K562 (cell line): ENCODE measurements at regions of chr1 and their contacts with region 1.

Region 1: DNA sequence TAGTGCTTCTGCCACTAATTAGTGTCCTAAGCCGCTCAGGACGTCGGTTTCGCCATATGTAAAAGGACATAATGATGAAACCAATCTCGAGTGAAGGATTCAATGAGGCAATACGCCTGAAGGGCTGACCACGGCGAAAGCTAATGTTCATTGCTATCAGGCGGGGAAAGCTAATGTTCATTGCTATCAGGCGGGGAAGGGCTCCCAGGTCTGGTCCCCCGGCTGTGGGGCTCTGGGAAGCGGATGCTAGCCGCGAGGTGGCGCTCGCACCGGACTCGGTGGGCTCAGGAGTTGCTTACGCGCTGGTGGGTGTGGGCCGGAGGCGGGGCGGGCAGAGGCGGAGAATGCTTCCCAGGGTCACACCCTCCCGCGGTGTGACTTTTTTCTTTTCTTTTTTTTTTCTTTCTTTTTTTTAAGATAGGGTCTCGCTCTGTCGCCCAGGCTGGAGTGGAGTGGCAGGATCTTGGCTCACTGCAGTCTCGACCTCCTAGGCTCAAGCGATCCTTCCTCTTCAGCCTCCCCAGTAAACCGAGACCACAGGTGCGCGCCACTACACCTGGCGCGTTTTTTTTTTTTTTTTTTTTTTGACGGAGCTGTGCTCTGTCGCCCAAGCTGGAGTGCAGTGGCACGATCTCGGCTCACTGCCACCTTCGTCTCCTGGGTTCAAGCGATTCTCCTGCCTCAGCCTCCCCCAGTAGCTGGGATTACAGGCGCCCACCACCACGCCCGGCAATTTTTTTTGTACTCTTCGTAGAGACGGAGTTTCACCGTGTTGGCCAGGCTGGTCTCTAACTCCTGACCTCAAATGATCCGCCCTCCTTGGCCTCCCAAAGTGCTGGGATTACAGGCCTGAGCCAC is 1.1 kb upstream of the PEAR1 start:
- DNase-seq: peak; percentile 91 to 96 (median 92)
- ATAC-seq: peak; percentile 94
- H3K4me3 ChIP-seq: no peak overlapping the region
- H3K27ac ChIP-seq: no peak overlapping the region; the same call in 2 of the 3 replicates
- H3K4me1 ChIP-seq: peaks cover 30 to 48% of the 10 kb centered on the region in 2 experiments
- H3K27me3 ChIP-seq: no peaks in the 10 kb centered on the region
- CTCF ChIP-seq: peak; percentile 91 to 94 (median 93)
- EP300 ChIP-seq: no peak
- POLR2A ChIP-seq: no peak
- RAD21 ChIP-seq: peak; percentile 87 to 93

Region 2: DNA sequence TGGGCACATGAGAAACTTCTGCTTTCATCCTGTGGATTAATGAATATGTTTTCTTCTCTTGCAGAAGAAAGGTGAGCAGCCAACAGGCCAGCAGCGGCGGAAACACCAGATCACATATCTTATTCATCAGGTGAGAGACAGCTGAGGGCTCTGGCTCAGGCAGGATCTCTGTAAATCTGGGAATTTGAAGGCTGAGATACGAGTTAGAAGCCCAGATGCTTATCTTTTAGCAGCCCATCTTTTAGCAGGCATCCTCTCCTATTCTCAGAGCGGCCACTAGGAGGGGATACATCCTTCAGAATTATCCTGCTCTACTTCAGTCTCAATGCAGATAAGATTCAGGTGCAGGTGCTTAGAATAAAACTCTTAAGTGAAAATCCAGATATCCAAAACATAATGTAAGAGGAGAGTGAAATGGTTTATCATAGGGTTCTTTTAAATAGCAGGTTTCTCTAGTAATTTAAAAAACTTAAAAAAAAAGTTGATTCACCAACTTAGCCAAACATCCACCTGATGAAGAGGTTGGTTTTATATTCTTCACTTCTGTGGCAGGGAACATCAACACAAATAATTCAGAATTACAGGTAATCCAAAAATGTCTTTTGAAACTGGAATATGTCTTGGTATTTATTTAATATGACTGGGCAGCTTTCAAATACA is 95.1 kb before region 1 on chr1:
- CTCF ChIA-PET with region 1: interaction called, 8 read pairs
- POLR2A ChIA-PET with region 1: interaction called, 3 read pairs
- in situ Hi-C with region 1: no loop called
- intact Hi-C with region 1: loop called (anchors 1 kb)
- DNase-seq: peak; percentile 70 to 77 (median 74)
- ATAC-seq: peak; percentile 85
- H3K4me3 ChIP-seq: no peak overlapping the region
- H3K27ac ChIP-seq: no peak overlapping the region
- H3K4me1 ChIP-seq: no peaks in the 10 kb centered on the region
- H3K27me3 ChIP-seq: no peaks in the 10 kb centered on the region
- CTCF ChIP-seq: peak; percentile 70 to 91 (median 85)
- EP300 ChIP-seq: peak; percentile 29
- POLR2A ChIP-seq: no peak
- RAD21 ChIP-seq: peak; percentile 86 to 89

Region 3: DNA sequence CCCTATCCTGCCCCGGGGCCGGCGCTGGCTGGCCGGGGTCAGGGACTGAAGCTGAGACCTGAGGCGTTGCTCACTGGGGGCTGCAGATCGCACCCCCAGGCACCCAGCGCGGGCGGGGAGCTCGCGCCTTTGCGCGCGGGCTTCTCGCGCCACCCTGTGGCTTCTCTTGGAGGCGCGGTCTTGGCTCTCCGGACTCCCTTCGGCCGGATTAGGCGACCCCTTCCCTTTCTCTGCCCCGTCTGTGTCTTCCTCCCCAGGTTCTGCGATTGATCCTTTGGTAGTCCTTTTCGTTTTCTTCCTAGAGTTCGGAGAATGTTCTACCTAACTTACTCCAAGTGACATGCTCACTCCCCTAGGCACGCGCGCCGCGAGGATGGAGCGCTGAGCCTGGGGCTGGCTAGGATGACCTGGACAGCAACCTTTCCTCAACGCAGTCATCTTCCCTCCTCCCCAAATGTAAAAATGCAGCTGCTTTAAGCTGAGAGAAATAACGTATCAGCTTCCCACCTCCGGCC is 32.2 kb before region 1 on chr1:
- CTCF ChIA-PET with region 1: no interaction called
- POLR2A ChIA-PET with region 1: interaction called, 3 read pairs
- in situ Hi-C with region 1: no loop called
- intact Hi-C with region 1: loop called (anchors 1 kb)
- DNase-seq: peak; percentile 80 to 86 (median 80)
- ATAC-seq: peak; percentile 78
- H3K4me3 ChIP-seq: peak overlapping the region; percentile 34
- H3K27ac ChIP-seq: no peak overlapping the region; the same call in 2 of the 3 replicates
- H3K4me1 ChIP-seq: peaks cover 75 to 81% of the 10 kb centered on the region in 2 experiments
- H3K27me3 ChIP-seq: no peaks in the 10 kb centered on the region
- CTCF ChIP-seq: peak; percentile 83 to 90 (median 85)
- EP300 ChIP-seq: no peak
- POLR2A ChIP-seq: no peak
- RAD21 ChIP-seq: peak; percentile 89 to 94

Region 4: GRCh38 chr1:156876281-156876680 is 16.1 kb before region 1 on chr1:
- CTCF ChIA-PET with region 1: no interaction called
- POLR2A ChIA-PET with region 1: no interaction called
- in situ Hi-C with region 1: no loop called
- intact Hi-C with region 1: no loop called
- DNase-seq: no peak
- ATAC-seq: no peak; the same call in 2 of the 3 replicates
- H3K4me3 ChIP-seq: no peak overlapping the region
- H3K27ac ChIP-seq: no peak overlapping the region
- H3K4me1 ChIP-seq: peaks cover 0 to 26% of the 10 kb centered on the region in 2 experiments; a peak in 3 of 5 replicates
- H3K27me3 ChIP-seq: no peaks in the 10 kb centered on the region
- CTCF ChIP-seq: no peak
- EP300 ChIP-seq: no peak
- POLR2A ChIP-seq: no peak
- RAD21 ChIP-seq: no peak

Region 5: DNA sequence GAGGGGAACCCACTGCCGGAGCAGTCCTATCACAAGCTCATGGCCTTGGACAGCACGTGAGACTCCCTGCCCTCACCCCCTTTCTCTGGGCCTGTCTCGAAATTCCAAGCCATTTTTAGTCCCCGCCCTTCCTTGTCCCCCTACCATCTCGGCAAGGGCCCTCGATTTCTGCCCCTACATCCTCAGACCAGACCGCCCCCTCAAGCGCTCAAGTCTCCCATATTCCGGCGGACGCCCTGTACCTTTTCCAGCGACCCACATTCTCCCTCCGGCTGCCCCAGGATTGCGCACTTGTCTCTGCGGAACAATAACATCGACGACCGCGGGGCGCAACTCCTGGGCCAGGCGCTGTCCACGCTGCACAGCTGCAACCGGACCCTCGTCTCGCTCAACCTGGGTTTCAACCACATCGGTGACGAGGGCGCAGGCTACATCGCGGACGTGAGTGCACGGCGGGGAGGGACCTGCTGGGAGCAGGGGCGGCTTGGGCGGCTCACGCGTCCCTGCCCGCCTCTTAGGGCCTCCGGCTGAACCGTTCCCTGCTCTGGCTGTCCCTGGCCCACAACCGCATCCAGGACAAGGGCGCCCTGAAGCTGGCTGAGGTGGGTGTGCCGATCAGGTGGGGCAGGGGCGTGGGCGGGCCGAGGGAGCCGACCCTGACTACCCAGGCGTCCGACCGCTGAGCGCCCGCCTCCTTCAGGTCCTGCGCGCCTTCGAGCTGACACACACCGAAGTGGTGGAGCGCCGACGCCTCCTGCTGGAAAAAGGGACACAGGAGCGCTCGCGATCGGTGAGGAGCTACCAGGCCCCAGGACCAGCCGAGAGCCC is 35.0 kb after region 1 on chr1:
- CTCF ChIA-PET with region 1: interaction called, 9 read pairs
- POLR2A ChIA-PET with region 1: interaction called, 4 read pairs
- in situ Hi-C with region 1: loop called (anchors 5 kb)
- intact Hi-C with region 1: no loop called
- DNase-seq: peak; percentile 74 to 87 (median 78)
- ATAC-seq: peak; percentile 87
- H3K4me3 ChIP-seq: peak overlapping the region; percentile 30; the same call in 1 of the 2 replicates
- H3K27ac ChIP-seq: no peak overlapping the region; the same call in 2 of the 3 replicates
- H3K4me1 ChIP-seq: peaks cover 24 to 33% of the 10 kb centered on the region in 2 experiments
- H3K27me3 ChIP-seq: peaks cover 5 to 6% of the 10 kb centered on the region in 2 experiments; a peak in 2 of 5 replicates
- CTCF ChIP-seq: peak; percentile 77 to 92 (median 81)
- EP300 ChIP-seq: no peak
- POLR2A ChIP-seq: no peak
- RAD21 ChIP-seq: peak; percentile 77 to 78

Region 6: GRCh38 chr1:157307491-157307890 is 415.1 kb after region 1 on chr1:
- CTCF ChIA-PET with region 1: no interaction called
- POLR2A ChIA-PET with region 1: no interaction called
- in situ Hi-C with region 1: no loop called
- intact Hi-C with region 1: no loop called
- DNase-seq: no peak
- ATAC-seq: no peak
- H3K4me3 ChIP-seq: no peak overlapping the region
- H3K27ac ChIP-seq: no peak overlapping the region
- H3K4me1 ChIP-seq: peaks cover 10 to 32% of the 10 kb centered on the region in 2 experiments
- H3K27me3 ChIP-seq: no peaks in the 10 kb centered on the region
- CTCF ChIP-seq: no peak
- EP300 ChIP-seq: no peak
- POLR2A ChIP-seq: no peak
- RAD21 ChIP-seq: no peak